ENCODE measurements at regions of chr3 and their contacts with region 1.

Region 1: DNA sequence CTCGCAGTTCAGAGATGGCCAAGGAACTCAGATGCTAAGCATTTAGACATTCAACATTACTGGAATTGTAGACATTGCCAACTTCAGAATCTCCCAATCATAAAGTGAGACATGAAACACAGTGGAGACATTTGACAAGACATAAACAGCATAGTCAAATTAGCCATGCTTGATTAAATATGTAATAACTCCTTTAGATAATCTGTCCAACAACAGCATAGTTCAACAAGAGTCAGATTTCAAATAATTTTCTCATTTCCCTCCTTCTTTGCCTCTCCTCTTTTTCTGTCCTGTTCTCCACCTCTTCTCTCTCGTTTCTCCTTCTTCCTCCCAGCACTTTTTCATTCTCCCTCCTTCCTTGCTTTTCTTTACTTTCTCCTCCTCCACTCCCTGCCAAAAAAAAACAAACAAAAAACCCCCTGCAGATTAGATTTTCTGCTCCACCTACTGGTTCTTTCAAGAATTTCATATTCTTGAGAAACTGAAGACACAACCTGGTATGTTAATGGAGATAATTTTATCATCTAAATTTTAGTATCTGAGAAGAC is 20.2 kb downstream of the CPOX start:
- DNase-seq: peak in 3 of 14 experiments; percentile 59 to 65 (median 63)
- ATAC-seq: peak; percentile 56
- H3K4me3 ChIP-seq: no peak overlapping the region
- H3K4me3 Mint-ChIP-seq: no peak overlapping the region
- H3K27ac ChIP-seq: no peak overlapping the region
- H3K27ac Mint-ChIP-seq: peak overlapping the region; percentile 3
- H3K4me1 ChIP-seq: no peaks in the 10 kb centered on the region
- H3K4me1 Mint-ChIP-seq: peaks cover 17% of the 10 kb centered on the region
- H3K27me3 ChIP-seq: no peaks in the 10 kb centered on the region
- H3K27me3 Mint-ChIP-seq: no peaks in the 10 kb centered on the region
- CTCF ChIP-seq: peak; percentile 74

Region 2: DNA sequence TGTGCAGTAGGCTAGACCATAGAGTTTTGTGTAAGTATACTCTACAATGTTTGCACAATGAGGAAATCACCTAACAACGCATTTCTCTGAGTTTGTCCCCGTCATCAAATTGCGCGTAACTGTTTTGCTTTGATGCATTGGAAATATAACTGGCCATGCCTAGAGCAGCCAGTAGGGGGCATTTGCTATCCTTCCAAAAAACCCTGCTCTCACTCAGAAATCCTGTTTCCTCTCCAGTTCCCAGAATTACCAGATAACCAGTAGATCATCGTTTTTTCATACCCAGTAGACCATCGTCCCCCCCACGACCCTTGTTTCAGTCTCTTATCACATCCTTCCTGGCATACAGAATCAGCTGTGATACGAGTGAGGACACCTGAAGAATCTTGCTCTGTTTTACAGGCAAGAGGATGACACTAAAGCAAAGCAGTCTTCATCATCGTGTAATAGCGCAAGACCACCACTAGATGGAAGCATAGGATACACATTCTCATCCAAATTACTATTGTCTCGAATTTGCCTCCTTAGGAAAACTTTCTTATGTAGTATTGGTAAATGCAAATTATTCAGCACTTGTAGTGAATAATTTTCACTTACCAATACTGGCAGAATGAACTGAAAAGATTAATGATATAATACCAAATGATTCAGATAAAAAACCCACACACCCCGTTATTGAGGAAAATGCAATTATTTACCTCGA is 533.8 kb before region 1 on chr3:
- CTCF ChIA-PET with region 1: no interaction called
- POLR2A ChIA-PET with region 1: no interaction called
- intact Hi-C with region 1: loop called (anchors 1 to 2 kb)
- DNase-seq: peak; percentile 40 to 91 (median 62)
- ATAC-seq: peak; percentile 93
- H3K4me3 ChIP-seq: peak overlapping the region; percentile 45
- H3K4me3 Mint-ChIP-seq: peak overlapping the region; percentile 72
- H3K27ac ChIP-seq: peak overlapping the region; percentile 59 to 70
- H3K27ac Mint-ChIP-seq: peak overlapping the region; percentile 90
- H3K4me1 ChIP-seq: no peaks in the 10 kb centered on the region
- H3K4me1 Mint-ChIP-seq: no peaks in the 10 kb centered on the region
- H3K27me3 ChIP-seq: no peaks in the 10 kb centered on the region
- H3K27me3 Mint-ChIP-seq: peaks cover 15% of the 10 kb centered on the region
- CTCF ChIP-seq: peak; percentile 98

Region 3: GRCh38 chr3:98500039-98500438 is 73.2 kb before region 1 on chr3:
- CTCF ChIA-PET with region 1: no interaction called
- POLR2A ChIA-PET with region 1: no interaction called
- intact Hi-C with region 1: no loop called
- DNase-seq: no peak
- ATAC-seq: no peak
- H3K4me3 ChIP-seq: no peak overlapping the region
- H3K4me3 Mint-ChIP-seq: no peak overlapping the region
- H3K27ac ChIP-seq: no peak overlapping the region
- H3K27ac Mint-ChIP-seq: no peak overlapping the region
- H3K4me1 ChIP-seq: no peaks in the 10 kb centered on the region
- H3K4me1 Mint-ChIP-seq: no peaks in the 10 kb centered on the region
- H3K27me3 ChIP-seq: no peaks in the 10 kb centered on the region
- H3K27me3 Mint-ChIP-seq: no peaks in the 10 kb centered on the region
- CTCF ChIP-seq: no peak

Region 4: DNA sequence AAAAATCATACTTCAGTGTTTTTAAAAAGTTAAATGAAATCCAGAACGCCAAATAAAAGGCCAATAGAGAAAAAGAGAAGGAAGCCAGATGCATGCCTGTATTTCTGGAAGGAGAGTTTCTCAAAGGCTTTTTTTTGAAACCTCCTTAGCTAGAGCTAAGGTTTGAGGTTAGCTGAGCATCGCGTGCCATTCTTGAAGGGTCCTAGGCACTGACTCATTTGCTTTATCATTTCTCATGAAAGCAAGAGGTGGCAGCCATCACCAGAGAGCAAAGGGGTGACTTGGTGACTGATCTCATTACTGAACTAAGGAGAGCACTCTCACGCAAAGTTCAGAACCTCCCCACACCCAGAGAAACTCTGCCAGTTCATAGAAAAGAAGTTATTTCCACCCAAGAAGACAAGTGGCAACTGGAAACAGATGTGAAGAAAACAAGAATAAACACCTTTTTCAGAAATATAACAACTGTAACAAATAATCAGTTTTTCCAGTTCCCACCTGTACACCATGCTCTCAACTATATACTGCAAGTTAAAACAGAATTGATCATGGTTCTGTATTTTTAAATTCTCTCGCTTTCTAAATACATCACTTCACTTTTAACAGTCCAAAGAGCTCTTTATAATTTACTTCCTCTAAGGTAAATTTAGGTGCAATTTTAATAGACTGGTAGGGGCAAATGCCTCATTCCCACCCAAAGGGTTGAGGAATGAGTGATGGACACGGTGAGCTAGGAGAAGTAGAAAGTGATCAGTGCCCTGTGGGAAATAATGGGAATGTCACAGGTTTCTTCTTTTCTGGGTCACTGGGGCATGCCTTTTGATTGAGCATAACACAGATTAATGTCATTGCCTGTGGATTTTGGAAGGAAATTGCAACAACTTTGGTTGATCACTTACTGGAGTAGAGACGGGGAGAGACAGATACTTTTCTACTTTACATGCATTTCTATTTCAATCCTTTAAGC is 16.8 kb before region 1 on chr3:
- CTCF ChIA-PET with region 1: interaction called, 3 read pairs
- POLR2A ChIA-PET with region 1: interaction called, 10 read pairs
- intact Hi-C with region 1: no loop called
- DNase-seq: peak in 13 of 14 experiments; percentile 29 to 93 (median 49)
- ATAC-seq: peak; percentile 84
- H3K4me3 ChIP-seq: peak overlapping the region; percentile 32
- H3K4me3 Mint-ChIP-seq: peak overlapping the region; percentile 65
- H3K27ac ChIP-seq: peak overlapping the region; percentile 54 to 61
- H3K27ac Mint-ChIP-seq: peak overlapping the region; percentile 92
- H3K4me1 ChIP-seq: peaks cover 37% of the 10 kb centered on the region
- H3K4me1 Mint-ChIP-seq: peaks cover 75% of the 10 kb centered on the region
- H3K27me3 ChIP-seq: no peaks in the 10 kb centered on the region
- H3K27me3 Mint-ChIP-seq: no peaks in the 10 kb centered on the region
- CTCF ChIP-seq: no peak

Region 5: GRCh38 chr3:98645039-98645438 is 71.8 kb after region 1 on chr3:
- CTCF ChIA-PET with region 1: no interaction called
- POLR2A ChIA-PET with region 1: no interaction called
- intact Hi-C with region 1: no loop called
- DNase-seq: no peak
- ATAC-seq: no peak
- H3K4me3 ChIP-seq: no peak overlapping the region
- H3K4me3 Mint-ChIP-seq: no peak overlapping the region
- H3K27ac ChIP-seq: no peak overlapping the region
- H3K27ac Mint-ChIP-seq: no peak overlapping the region
- H3K4me1 ChIP-seq: no peaks in the 10 kb centered on the region
- H3K4me1 Mint-ChIP-seq: no peaks in the 10 kb centered on the region
- H3K27me3 ChIP-seq: peaks cover 0 to 2% of the 10 kb centered on the region in 2 experiments
- H3K27me3 Mint-ChIP-seq: peaks cover 16% of the 10 kb centered on the region
- CTCF ChIP-seq: no peak

Measured in CD4-positive, alpha-beta T cell (primary cell).